Mammary epithelial cell (primary cell): ENCODE measurements at regions of chr4 and their contacts with region 1.

Region 1: GRCh38 chr4:83284193-83285054 is at the start of gene COQ2:
- DNase-seq: peak; percentile 89
- H3K4me3 ChIP-seq: peak within 1 kb of the TSS; percentile 62 to 81 (median 73)
- H3K27ac ChIP-seq: peak within 1 kb of the TSS; percentile 74
- H3K4me1 ChIP-seq: peaks cover 21% of the 10 kb centered on the region
- H3K27me3 ChIP-seq: no peaks in the 10 kb centered on the region
- CTCF ChIP-seq: peak in 1 of 2 donors; percentile 29
- total RNA-seq, gene COQ2: 9.3 to 20.4 TPM

Region 2: GRCh38 chr4:82462415-82462831 is 822.0 kb before region 1 on chr4:
- CTCF ChIA-PET with region 1: no interaction called
- dilution Hi-C with region 1: no loop called
- in situ Hi-C with region 1: no loop called
- intact Hi-C with region 1: loop called (anchors 1 kb)
- DNase-seq: peak; percentile 62
- H3K4me3 ChIP-seq: no peak overlapping the region
- H3K27ac ChIP-seq: no peak overlapping the region
- H3K4me1 ChIP-seq: no peaks in the 10 kb centered on the region
- H3K27me3 ChIP-seq: no peaks in the 10 kb centered on the region
- CTCF ChIP-seq: peak; percentile 78 to 79

Region 3: GRCh38 chr4:82900331-82901128 is 383.9 kb before region 1 on chr4 and contains the start of gene THAP9:
- CTCF ChIA-PET with region 1: no interaction called
- dilution Hi-C with region 1: no loop called
- in situ Hi-C with region 1: no loop called
- intact Hi-C with region 1: loop called (anchors 2 kb)
- DNase-seq: peak; percentile 100
- H3K4me3 ChIP-seq: peak within 1 kb of the TSS; percentile 69 to 90 (median 70)
- H3K27ac ChIP-seq: peak within 1 kb of the TSS; percentile 96
- H3K4me1 ChIP-seq: peaks cover 2% of the 10 kb centered on the region
- H3K27me3 ChIP-seq: no peaks in the 10 kb centered on the region
- CTCF ChIP-seq: no peak
- total RNA-seq, gene THAP9: 2.8 to 3.0 TPM

Region 4: GRCh38 chr4:83083925-83084475 is 200.4 kb before region 1 on chr4:
- CTCF ChIA-PET with region 1: no interaction called
- dilution Hi-C with region 1: no loop called
- in situ Hi-C with region 1: no loop called
- intact Hi-C with region 1: no loop called
- DNase-seq: no peak
- H3K4me3 ChIP-seq: no peak overlapping the region
- H3K27ac ChIP-seq: no peak overlapping the region
- H3K4me1 ChIP-seq: peaks cover 13% of the 10 kb centered on the region
- H3K27me3 ChIP-seq: no peaks in the 10 kb centered on the region
- CTCF ChIP-seq: peak in 1 of 2 donors; percentile 6

Region 5: DNA sequence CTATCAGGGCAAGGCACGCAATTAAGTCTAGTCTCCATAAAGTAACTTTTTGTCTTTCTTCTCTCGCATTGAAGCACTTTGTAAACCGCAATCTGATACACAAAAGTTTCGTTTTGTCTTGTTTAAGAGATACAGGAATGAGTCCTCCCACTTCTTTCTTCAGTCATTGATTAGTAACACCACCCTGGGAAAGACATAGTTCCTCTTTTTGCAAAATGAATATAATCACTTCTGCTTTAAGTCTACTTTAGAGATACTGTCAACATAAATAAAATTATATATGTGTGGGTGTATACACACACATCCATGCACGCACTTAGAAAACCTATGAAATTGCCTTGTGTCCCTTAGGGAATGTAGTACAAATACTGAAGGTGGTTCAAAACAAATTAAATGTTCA is 11.5 kb before region 1 on chr4:
- CTCF ChIA-PET with region 1: interaction called, 10 read pairs
- dilution Hi-C with region 1: no loop called
- in situ Hi-C with region 1: no loop called
- intact Hi-C with region 1: no loop called
- DNase-seq: no peak
- H3K4me3 ChIP-seq: no peak overlapping the region
- H3K27ac ChIP-seq: no peak overlapping the region
- H3K4me1 ChIP-seq: no peaks in the 10 kb centered on the region
- H3K27me3 ChIP-seq: no peaks in the 10 kb centered on the region
- CTCF ChIP-seq: no peak

Region 6: DNA sequence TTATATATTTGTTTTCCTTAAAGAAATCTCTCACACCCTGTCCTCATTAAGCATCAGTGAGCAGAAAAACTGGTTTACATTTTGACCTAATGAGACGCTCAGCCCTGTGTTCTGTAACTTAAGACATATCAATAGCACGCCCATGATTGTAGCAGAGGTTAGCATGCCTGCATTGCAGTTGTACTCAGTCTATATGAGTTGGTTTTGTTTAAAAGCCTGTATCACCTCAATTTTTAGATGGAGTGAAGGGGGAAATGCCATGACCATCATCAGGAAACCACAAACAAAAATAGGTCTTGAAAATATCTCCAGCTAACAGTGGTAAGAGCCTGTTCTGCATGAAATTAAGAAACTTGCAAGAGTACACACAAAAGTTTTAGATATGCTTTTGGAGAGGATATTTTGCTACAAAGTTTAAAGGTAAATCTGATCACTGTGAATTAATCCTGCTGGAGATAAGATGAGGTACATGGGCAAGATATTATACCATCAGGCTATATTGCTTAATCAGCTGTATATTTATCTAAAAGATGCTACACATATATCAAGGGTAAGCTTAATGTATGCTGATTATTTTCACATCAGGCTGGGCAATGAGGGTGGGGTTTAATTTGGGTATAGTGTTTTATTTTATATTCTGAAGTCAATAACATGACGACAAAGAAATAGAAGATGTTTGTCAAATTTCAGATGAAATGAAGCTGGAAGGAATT is 13.3 kb after region 1 on chr4:
- CTCF ChIA-PET with region 1: no interaction called
- dilution Hi-C with region 1: no loop called
- in situ Hi-C with region 1: no loop called
- intact Hi-C with region 1: no loop called
- DNase-seq: no peak
- H3K4me3 ChIP-seq: no peak overlapping the region
- H3K27ac ChIP-seq: no peak overlapping the region
- H3K4me1 ChIP-seq: no peaks in the 10 kb centered on the region
- H3K27me3 ChIP-seq: no peaks in the 10 kb centered on the region
- CTCF ChIP-seq: no peak

Region 7: DNA sequence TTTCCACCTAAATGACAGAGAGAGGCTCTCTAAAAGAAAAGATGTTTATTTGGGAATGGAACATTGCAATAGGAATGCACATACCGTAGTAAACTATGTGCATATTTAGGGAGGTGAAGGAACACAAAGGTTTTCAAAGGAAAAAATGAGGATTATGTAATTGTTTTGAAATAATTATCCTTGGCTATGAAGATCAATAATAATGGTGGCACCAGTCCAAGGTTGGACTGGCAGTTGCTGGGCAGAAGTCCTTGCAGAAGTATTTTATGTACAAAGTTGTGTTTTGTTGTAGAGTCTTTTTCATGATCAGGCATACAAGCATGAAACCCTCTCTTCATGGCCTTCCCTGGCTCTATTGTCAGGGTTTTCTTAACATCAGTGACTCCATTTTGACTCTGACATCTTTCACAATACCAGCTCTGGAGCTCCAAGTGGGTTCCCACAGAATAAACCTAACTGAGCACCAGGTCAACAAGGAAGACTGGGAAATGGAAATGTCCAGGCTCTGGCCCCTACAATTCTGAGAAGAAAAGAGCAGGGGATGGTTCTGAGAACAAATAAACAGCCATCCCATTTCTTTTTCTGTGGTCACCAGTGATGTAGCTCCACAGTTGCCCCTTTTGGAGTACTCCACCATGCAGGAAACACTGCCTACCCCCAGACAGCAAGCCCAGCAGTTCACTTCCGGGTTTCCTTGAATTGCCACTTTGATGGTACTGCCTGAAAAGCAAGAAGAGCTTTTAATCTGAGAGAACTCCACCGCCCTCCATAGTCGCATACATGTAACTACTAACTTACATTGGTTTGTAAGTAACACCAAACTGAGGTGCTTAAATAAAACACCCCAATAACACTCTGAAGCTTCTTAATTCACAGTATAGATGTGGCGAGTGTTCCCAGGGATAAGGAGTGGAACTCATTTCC is 103.6 kb after region 1 on chr4:
- CTCF ChIA-PET with region 1: no interaction called
- dilution Hi-C with region 1: no loop called
- in situ Hi-C with region 1: no loop called
- intact Hi-C with region 1: loop called (anchors 1 kb)
- DNase-seq: no peak
- H3K4me3 ChIP-seq: no peak overlapping the region
- H3K27ac ChIP-seq: no peak overlapping the region
- H3K4me1 ChIP-seq: peaks cover 10% of the 10 kb centered on the region
- H3K27me3 ChIP-seq: no peaks in the 10 kb centered on the region
- CTCF ChIP-seq: peak in 1 of 2 donors; percentile 3

Region 8: DNA sequence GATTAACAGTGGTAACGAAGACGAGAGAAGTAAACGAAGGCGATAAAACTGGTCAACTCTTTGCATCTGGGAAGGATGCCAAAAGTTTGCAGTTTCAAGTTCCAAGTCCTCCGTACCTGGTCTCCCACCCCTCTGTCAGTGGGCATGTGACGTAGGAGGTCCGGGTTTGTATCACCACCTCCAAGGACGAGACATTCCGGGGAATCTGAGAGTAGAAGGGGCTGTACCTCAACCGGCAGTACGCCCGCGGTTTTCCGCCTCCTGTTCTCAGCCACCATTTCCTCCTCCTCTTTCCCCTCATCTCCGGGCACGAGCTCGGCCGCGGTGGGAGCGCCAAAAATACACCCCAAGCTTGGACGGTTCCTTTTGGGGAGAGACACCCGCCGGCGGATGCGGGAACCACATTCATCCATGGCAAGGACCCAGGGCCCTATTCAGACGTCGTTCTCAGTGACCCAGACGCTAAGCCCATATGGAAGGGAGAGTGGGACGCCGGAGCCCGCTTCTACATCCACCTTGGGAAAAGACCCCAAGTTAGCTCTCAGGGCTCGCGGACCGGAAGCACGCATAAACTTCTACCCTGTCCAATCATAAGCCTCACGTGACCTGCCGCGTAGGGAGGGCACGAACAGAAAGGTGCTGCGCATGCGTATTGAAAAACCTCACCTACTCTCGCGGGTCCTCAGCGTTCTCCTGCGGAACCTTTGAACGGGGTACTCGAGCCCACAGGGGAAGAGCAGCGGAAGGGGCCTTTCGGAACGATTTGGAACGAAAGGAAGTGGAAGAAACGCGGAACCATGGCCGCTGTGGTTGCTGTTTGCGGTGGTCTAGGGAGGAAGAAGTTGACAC is 171.1 kb after region 1 on chr4 and contains the starts of genes HELQ and MRPS18C:
- CTCF ChIA-PET with region 1: no interaction called
- dilution Hi-C with region 1: no loop called
- in situ Hi-C with region 1: no loop called
- intact Hi-C with region 1: loop called (anchors 1 kb)
- DNase-seq: peak; percentile 98
- H3K4me3 ChIP-seq: peak within 1 kb of the TSS; percentile 74 to 78 (median 76)
- H3K27ac ChIP-seq: peak within 1 kb of the TSS; percentile 95
- H3K4me1 ChIP-seq: no peaks in the 10 kb centered on the region
- H3K27me3 ChIP-seq: no peaks in the 10 kb centered on the region
- CTCF ChIP-seq: peak in 1 of 2 donors; percentile 53
- total RNA-seq, gene HELQ: 13.4 to 16.0 TPM
- total RNA-seq, gene MRPS18C: 10.8 to 59.5 TPM